Activated CD4-positive, alpha-beta memory T cell treated with anti-CD3 and anti-CD28 coated beads, Interleukin-2, amount 10 ng/mL, durations not matched to agents 7 days and 5 days (primary cell): ENCODE measurements at regions of chr10 and their contacts with region 1.

Region 1: GRCh38 chr10:11236234-11236633 is 218.6 kb downstream of the CELF2 start:
- DNase-seq: peak; percentile 52
- H3K4me3 Mint-ChIP-seq: peak overlapping the region; percentile 18
- H3K27ac Mint-ChIP-seq: peak overlapping the region; percentile 71
- H3K4me1 Mint-ChIP-seq: peaks cover 89% of the 10 kb centered on the region
- H3K27me3 Mint-ChIP-seq: no peaks in the 10 kb centered on the region

Region 2: GRCh38 chr10:11225935-11226334 is 10.3 kb before region 1 on chr10:
- CTCF ChIA-PET with region 1: interaction called, 21 read pairs
- POLR2A ChIA-PET with region 1: interaction called, 45 read pairs
- DNase-seq: peak; percentile 74
- H3K4me3 Mint-ChIP-seq: no peak overlapping the region
- H3K27ac Mint-ChIP-seq: peak overlapping the region; percentile 89
- H3K4me1 Mint-ChIP-seq: peaks cover 93% of the 10 kb centered on the region
- H3K27me3 Mint-ChIP-seq: no peaks in the 10 kb centered on the region